Prostate gland (tissue), 2 donors: ENCODE measurements at regions of chrX and their contacts with region 1.

Region 1: GRCh38 chrX:427812-428725 is 41.4 kb upstream of the PPP2R3B start:
- DNase-seq: no peak
- H3K4me3 ChIP-seq: no peak overlapping the region
- H3K27ac ChIP-seq: no peak overlapping the region
- H3K4me1 ChIP-seq: no peaks in the 10 kb centered on the region
- H3K27me3 ChIP-seq: peaks cover 6% of the 10 kb centered on the region
- CTCF ChIP-seq: no peak
- POLR2A ChIP-seq: no peak

Region 2: DNA sequence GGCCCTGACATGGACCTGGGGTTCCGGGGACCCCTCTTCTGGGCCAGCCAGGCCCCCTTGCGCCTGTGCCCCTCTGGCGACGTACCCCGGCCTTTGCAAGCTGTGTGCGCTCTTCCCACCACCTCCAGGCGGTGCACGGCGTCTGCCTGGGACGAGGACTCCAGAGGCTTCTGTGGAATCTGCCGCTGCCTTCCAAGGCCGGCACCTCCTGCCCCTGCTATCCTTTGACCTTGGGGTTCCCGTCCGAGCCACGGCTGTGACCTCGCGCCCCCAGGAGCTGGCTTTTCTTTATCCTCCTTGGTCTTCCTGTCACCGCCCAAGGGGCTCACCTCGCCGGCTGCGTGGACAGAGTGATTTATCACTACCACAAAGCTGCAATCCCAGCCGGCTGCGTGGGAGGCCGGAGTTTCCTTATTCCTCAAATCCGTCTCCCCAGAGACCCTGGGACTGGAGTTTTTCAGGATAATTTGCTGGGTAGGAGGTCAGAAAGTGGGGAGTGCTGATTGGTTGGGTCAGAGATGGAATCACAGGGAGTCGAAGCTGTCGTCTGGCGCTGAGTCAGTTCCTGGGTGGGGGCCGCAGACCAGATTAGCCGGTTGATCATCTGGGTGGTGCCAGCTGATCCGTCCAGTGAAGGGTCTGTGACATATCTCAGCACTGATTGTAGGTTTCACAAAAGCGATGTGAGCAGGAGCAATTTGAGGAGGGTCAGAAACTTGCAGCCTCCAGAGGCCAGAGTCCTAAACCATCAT is 166.7 kb before region 1 on chrX:
- intact Hi-C with region 1: no loop called
- DNase-seq: peak; percentile 3
- H3K4me3 ChIP-seq: no peak overlapping the region
- H3K27ac ChIP-seq: no peak overlapping the region
- H3K4me1 ChIP-seq: no peaks in the 10 kb centered on the region
- H3K27me3 ChIP-seq: no peaks in the 10 kb centered on the region
- CTCF ChIP-seq: no peak
- POLR2A ChIP-seq: no peak

Region 3: GRCh38 chrX:1154001-1154400 is 725.9 kb after region 1 on chrX:
- intact Hi-C with region 1: loop called (anchors 10 kb)
- DNase-seq: no peak
- H3K4me3 ChIP-seq: no peak overlapping the region
- H3K27ac ChIP-seq: no peak overlapping the region
- H3K4me1 ChIP-seq: no peaks in the 10 kb centered on the region
- H3K27me3 ChIP-seq: no peaks in the 10 kb centered on the region
- CTCF ChIP-seq: no peak
- POLR2A ChIP-seq: no peak